ENCODE measurements at regions of chr3 and their contacts with region 1.

Region 1: GRCh38 chr3:25789596-25790556 is at the start of gene OXSM:
- DNase-seq: peak; percentile 90
- H3K4me3 Mint-ChIP-seq: peak within 1 kb of the TSS; percentile 95
- H3K27ac Mint-ChIP-seq: peak within 1 kb of the TSS; percentile 99
- H3K4me1 Mint-ChIP-seq: peaks cover 50% of the 10 kb centered on the region
- H3K27me3 Mint-ChIP-seq: no peaks in the 10 kb centered on the region
- total RNA-seq, gene OXSM: 15.2 and 15.4 TPM in 2 replicates

Region 2: GRCh38 chr3:23805633-23806533 is 1984.0 kb before region 1 on chr3 and contains the start of gene UBE2E1:
- intact Hi-C with region 1: loop called (anchors 10 kb)
- DNase-seq: peak; percentile 53
- H3K4me3 Mint-ChIP-seq: peak within 1 kb of the TSS; percentile 95
- H3K27ac Mint-ChIP-seq: peak within 1 kb of the TSS; percentile 96
- H3K4me1 Mint-ChIP-seq: peaks cover 49% of the 10 kb centered on the region
- H3K27me3 Mint-ChIP-seq: peaks cover 33% of the 10 kb centered on the region
- total RNA-seq, gene UBE2E1: 78.8 and 87.0 TPM in 2 replicates

Region 3: GRCh38 chr3:25618028-25618427 is 171.8 kb before region 1 on chr3:
- intact Hi-C with region 1: no loop called
- DNase-seq: no peak
- H3K4me3 Mint-ChIP-seq: no peak overlapping the region
- H3K27ac Mint-ChIP-seq: no peak overlapping the region
- H3K4me1 Mint-ChIP-seq: no peaks in the 10 kb centered on the region
- H3K27me3 Mint-ChIP-seq: no peaks in the 10 kb centered on the region

Region 4: DNA sequence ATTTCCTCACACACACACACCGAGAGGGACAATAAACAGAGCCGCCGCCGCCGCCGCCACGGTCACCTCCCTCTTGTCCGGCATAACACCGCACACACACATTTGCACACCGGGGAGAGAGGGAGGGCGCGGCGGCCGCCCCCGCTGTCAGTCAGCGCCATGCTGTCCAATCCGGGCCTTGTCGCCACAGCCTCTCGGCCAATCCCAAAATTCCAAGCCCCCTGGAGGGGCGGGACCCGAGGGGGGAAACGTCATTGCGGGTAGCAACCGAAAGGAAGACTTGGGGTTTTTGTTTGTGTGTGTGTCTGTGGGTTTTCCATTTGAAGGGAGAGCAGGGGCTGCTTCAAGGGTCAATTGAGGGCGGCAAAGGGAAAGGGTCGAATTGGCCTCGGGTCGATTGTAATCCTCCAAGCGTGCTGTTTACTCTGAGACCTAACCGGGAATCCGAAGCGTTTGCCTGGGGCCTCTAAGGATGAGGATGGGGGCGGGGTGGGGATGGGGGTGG is 125.0 kb before region 1 on chr3 and contains the start of gene TOP2B:
- intact Hi-C with region 1: loop called (anchors 1 kb)
- DNase-seq: peak; percentile 95
- H3K4me3 Mint-ChIP-seq: peak within 1 kb of the TSS; percentile 95
- H3K27ac Mint-ChIP-seq: peak within 1 kb of the TSS; percentile 97
- H3K4me1 Mint-ChIP-seq: peaks cover 36% of the 10 kb centered on the region
- H3K27me3 Mint-ChIP-seq: peaks cover 2% of the 10 kb centered on the region
- total RNA-seq, gene TOP2B: 133 and 135 TPM in 2 replicates

Region 5: GRCh38 chr3:25856902-25857518 is 67.1 kb after region 1 on chr3:
- intact Hi-C with region 1: loop called (anchors 2 kb)
- DNase-seq: no peak
- H3K4me3 Mint-ChIP-seq: no peak overlapping the region
- H3K27ac Mint-ChIP-seq: no peak overlapping the region
- H3K4me1 Mint-ChIP-seq: peaks cover 5% of the 10 kb centered on the region
- H3K27me3 Mint-ChIP-seq: peaks cover 2% of the 10 kb centered on the region

Measured in activated T-helper 1 cell treated with anti-CD3 and anti-CD28 coated beads, Interleukin-12 subunit alpha, Interleukin-12 subunit beta, Interleukin-2, Interleukin-4 antibody, amounts not matched to agents 30 ng/mL and 10 ng/mL and 1 ng/mL, durations not matched to agents 14 hours and 24 hours and 36 hours (primary cell).